ENCODE measurements at regions of chr1 and their contacts with region 1.

Region 1: DNA sequence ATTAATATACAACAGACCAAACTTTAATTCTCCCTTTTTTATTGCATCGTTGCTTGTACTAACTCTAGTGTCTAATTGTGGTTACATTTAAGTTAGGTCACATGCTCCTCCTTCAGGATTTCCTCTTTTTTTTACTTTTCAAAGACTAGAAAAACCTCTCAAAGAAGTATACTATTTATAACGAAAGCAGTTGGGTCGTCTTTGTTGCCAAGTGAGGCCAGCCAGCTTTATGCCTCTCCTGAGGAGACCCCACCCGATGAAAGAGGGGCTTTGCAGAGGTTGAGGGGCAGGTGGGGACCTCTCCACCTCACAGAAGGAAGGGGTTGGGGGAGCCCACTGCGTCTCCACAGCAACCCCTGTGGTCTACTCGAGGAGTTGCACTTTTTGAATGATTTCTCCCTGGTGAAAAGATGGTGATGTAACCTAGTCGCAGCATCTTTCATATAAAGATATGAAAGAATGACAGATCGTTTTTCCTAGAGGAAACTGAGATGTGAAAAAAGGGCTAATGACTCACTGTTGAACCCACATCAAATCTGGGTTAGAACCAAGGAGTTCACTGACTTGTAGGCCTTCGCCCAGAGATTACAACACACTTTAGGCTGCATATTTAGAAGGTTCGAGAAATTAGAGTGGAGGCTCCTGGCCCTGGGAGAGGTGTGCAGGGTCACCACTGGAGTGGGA is 6.4 kb downstream of the TGFB2 start:
- DNase-seq: no peak
- ATAC-seq: peak; percentile 32; the same call in 1 of the 3 replicates
- H3K4me3 ChIP-seq: no peak overlapping the region
- H3K27ac ChIP-seq: no peak overlapping the region
- H3K4me1 ChIP-seq: peaks cover 11% of the 10 kb centered on the region
- H3K27me3 ChIP-seq: peaks cover 0 to 21% of the 10 kb centered on the region in 2 experiments; a peak in 3 of 5 replicates
- CTCF ChIP-seq: no peak
- EP300 ChIP-seq: no peak
- POLR2A ChIP-seq: no peak
- RAD21 ChIP-seq: no peak

Region 2: DNA sequence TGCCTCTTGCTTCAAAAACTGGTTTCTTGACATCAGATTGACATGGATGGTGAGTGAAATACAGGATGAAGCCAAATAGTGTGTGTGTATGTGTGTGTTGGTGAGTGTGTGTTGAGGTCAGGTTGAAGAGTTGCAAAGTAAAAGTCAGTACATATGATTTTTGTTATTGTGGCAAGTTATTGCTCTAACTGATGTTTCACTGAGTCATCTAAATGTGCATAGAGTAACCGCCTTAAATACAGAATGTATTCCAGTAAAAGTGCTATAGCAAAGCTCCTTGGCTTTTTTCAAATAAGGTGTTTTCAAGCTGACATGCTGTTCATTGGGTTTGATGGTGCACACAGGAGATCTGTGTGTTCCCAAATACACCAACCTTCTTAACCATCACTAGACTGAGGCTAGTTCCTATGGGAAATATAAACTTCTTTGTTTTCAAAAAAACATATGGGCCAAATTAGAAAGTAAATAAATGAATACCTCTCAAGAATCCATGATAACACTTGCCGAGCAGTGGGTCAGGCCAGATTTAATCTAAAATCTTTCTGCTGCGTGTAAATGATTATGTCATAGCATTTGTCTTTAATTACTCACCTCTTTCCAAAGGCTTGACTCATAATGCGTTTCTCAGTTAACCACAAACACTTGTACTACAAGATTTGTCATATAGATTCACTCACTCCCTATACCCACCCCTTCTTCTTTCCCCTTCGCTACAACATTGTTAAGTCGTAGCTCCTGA is 973.3 kb after region 1 on chr1:
- CTCF ChIA-PET with region 1: no interaction called
- POLR2A ChIA-PET with region 1: no interaction called
- in situ Hi-C with region 1: loop called (anchors 25 kb)
- intact Hi-C with region 1: no loop called
- DNase-seq: no peak
- ATAC-seq: no peak
- H3K4me3 ChIP-seq: no peak overlapping the region
- H3K27ac ChIP-seq: no peak overlapping the region
- H3K4me1 ChIP-seq: peaks cover 2% of the 10 kb centered on the region
- H3K27me3 ChIP-seq: no peaks in the 10 kb centered on the region
- CTCF ChIP-seq: no peak
- EP300 ChIP-seq: no peak
- POLR2A ChIP-seq: no peak
- RAD21 ChIP-seq: no peak

Measured in HepG2 (cell line).